Naive thymus-derived CD4-positive, alpha-beta T cell (primary cell): ENCODE measurements at regions of chr20 and their contacts with region 1.

Region 1: DNA sequence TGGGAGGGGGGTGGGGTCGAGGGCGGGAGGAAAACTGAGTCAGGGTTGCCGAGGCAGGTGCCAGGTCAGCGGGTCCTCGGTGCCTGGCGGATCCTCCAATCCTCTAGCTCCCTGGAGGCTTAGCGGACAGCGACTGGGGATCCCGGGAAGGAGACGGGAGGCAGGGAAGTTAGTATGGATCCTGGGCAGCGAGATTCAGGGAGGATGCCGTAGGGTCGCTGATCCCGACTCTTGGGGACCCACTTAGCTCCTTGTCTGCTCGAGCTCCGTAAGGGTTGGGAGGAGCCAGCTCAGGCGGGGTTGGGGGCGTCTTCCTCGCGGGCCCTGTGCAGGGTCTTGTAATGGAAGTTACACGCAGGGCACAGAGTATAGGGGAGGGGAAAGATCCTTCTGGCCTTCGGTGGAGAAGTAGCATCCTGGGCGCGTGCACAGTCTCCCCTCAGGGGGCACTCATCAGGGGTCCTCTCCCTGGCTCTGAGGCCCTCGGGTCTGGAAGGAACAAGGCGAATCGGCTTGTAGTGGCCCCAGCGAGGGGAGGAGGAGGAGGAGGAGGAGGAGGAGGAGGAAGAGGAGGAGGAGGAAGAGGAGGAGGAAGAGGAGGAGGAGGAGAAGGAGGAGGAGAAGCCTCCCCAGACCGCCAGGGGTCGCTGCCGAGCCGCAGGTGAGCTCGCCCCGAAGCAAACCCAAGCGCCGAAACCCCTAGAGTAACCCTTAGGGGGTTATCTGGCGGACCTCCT is 6.4 kb upstream of the SLC12A5 start:
- DNase-seq: peak; percentile 47 to 81 (median 69)
- ATAC-seq: peak; percentile 66
- H3K4me3 ChIP-seq: peak overlapping the region; percentile 25
- H3K4me3 Mint-ChIP-seq: peak overlapping the region; percentile 46 to 85 (median 76)
- H3K27ac ChIP-seq: no peak overlapping the region
- H3K27ac Mint-ChIP-seq: no peak overlapping the region
- H3K4me1 ChIP-seq: peaks cover 0 to 6% of the 10 kb centered on the region in 2 donors
- H3K4me1 Mint-ChIP-seq: peaks cover 12 to 25% (median 17%) of the 10 kb centered on the region in 7 donors
- H3K27me3 ChIP-seq: peaks cover 7 to 15% of the 10 kb centered on the region in 2 donors
- H3K27me3 Mint-ChIP-seq: peaks cover 42 to 63% (median 47%) of the 10 kb centered on the region in 5 donors

Region 2: DNA sequence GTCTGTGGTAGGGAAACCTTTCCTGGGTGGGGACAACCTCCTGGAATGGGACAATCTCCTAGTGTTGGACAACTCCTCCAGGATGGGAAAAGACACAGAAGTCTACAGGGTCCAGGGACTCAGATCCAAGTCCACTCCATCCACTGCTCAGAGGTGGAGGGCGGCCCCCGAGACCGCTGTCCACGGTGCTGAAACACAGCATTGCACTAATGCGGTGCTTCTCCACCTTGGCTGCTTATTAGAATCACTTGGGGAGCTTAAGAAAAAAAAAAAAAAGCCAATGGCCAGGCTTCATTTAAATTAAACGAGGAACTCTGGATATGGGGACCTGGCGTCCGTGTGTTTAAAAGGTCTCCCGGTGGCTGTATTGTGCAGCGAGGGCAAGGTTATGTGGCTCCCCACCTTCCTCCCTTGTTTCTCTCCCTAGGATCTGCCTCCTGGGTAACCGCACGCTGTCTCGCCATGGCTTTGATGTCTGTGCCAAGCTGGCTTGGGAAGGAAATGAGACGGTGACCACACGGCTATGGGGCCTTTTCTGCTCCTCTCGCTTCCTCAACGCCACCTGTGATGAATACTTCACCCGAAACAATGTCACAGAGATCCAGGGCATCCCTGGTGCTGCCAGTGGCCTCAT is 18.4 kb after region 1 on chr20:
- CTCF ChIA-PET with region 1: no interaction called
- POLR2A ChIA-PET with region 1: no interaction called
- intact Hi-C with region 1: loop called in 1 of 2 experiments (anchors 2 kb)
- DNase-seq: peak in 7 of 9 donors; percentile 17 to 64 (median 27)
- ATAC-seq: peak; percentile 52
- H3K4me3 ChIP-seq: no peak overlapping the region
- H3K4me3 Mint-ChIP-seq: no peak overlapping the region
- H3K27ac ChIP-seq: no peak overlapping the region
- H3K27ac Mint-ChIP-seq: no peak overlapping the region
- H3K4me1 ChIP-seq: no peaks in the 10 kb centered on the region
- H3K4me1 Mint-ChIP-seq: no peaks in the 10 kb centered on the region
- H3K27me3 ChIP-seq: no peaks in the 10 kb centered on the region
- H3K27me3 Mint-ChIP-seq: peaks cover 5 to 59% (median 55%) of the 10 kb centered on the region in 5 donors

Region 3: GRCh38 chr20:46070215-46070900 is 47.8 kb after region 1 on chr20:
- CTCF ChIA-PET with region 1: no interaction called
- POLR2A ChIA-PET with region 1: no interaction called
- intact Hi-C with region 1: no loop called
- DNase-seq: no peak
- ATAC-seq: no peak
- H3K4me3 ChIP-seq: no peak overlapping the region
- H3K4me3 Mint-ChIP-seq: no peak overlapping the region
- H3K27ac ChIP-seq: no peak overlapping the region
- H3K27ac Mint-ChIP-seq: no peak overlapping the region
- H3K4me1 ChIP-seq: no peaks in the 10 kb centered on the region
- H3K4me1 Mint-ChIP-seq: peaks cover under 1 to 9% (median 8%) of the 10 kb centered on the region in 7 donors
- H3K27me3 ChIP-seq: no peaks in the 10 kb centered on the region
- H3K27me3 Mint-ChIP-seq: no peaks in the 10 kb centered on the region

Region 4: GRCh38 chr20:46151936-46152335 is 129.4 kb after region 1 on chr20:
- CTCF ChIA-PET with region 1: no interaction called
- POLR2A ChIA-PET with region 1: interaction called, 4 read pairs
- intact Hi-C with region 1: loop called in 1 of 2 experiments (anchors 1 kb)
- DNase-seq: no peak
- ATAC-seq: no peak
- H3K4me3 ChIP-seq: no peak overlapping the region
- H3K4me3 Mint-ChIP-seq: no peak overlapping the region
- H3K27ac ChIP-seq: no peak overlapping the region
- H3K27ac Mint-ChIP-seq: no peak overlapping the region
- H3K4me1 ChIP-seq: no peaks in the 10 kb centered on the region
- H3K4me1 Mint-ChIP-seq: no peaks in the 10 kb centered on the region
- H3K27me3 ChIP-seq: no peaks in the 10 kb centered on the region
- H3K27me3 Mint-ChIP-seq: peaks cover 0 to 13% (median 12%) of the 10 kb centered on the region in 5 donors